HepG2 (cell line): ENCODE measurements at regions of chr2 and their contacts with region 1.

Region 1: GRCh38 chr2:179751163-179751809 is 110.1 kb downstream of the ZNF385B start:
- DNase-seq: peak; percentile 27
- ATAC-seq: peak; percentile 52; the same call in 1 of the 3 replicates
- H3K4me3 ChIP-seq: no peak overlapping the region
- H3K27ac ChIP-seq: no peak overlapping the region
- H3K4me1 ChIP-seq: no peaks in the 10 kb centered on the region
- H3K27me3 ChIP-seq: no peaks in the 10 kb centered on the region
- CTCF ChIP-seq: peak; percentile 80
- EP300 ChIP-seq: no peak
- POLR2A ChIP-seq: no peak
- RAD21 ChIP-seq: peak; percentile 87

Region 2: DNA sequence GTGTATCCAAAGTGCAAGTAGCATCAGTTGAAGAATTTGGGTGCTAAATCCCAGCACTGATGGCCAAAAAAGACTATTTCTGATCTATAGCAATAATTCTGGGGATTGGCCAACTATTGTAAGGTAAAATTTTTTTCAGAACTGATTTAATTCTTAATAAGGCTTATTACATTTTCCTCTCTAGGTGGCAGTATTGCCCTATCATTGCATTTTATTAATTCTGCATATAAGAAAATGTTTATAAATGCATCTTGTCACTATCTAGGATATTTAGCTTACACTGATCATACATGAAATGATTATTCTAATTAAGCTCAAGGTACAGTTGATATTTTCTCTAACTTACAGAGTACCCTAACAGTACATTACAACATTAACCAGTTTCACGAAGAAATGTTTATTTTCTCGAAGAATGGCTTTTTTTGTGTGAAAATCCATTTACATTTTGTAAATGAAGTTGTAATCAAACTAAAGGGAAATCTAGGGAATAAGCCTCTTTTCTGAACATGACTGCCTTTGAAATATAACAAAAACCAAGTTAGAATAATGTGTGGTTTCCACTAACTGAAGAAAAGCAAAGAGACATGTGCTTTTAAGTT is 955.1 kb before region 1 on chr2:
- CTCF ChIA-PET with region 1: no interaction called
- POLR2A ChIA-PET with region 1: no interaction called
- in situ Hi-C with region 1: no loop called
- intact Hi-C with region 1: loop called (anchors 10 kb)
- DNase-seq: peak; percentile 10
- ATAC-seq: no peak
- H3K4me3 ChIP-seq: no peak overlapping the region
- H3K27ac ChIP-seq: no peak overlapping the region
- H3K4me1 ChIP-seq: no peaks in the 10 kb centered on the region
- H3K27me3 ChIP-seq: peaks cover 0 to 23% of the 10 kb centered on the region in 2 experiments; a peak in 2 of 5 replicates
- CTCF ChIP-seq: peak; percentile 22; the same call in 1 of the 2 replicates
- EP300 ChIP-seq: no peak
- POLR2A ChIP-seq: no peak
- RAD21 ChIP-seq: no peak

Region 3: DNA sequence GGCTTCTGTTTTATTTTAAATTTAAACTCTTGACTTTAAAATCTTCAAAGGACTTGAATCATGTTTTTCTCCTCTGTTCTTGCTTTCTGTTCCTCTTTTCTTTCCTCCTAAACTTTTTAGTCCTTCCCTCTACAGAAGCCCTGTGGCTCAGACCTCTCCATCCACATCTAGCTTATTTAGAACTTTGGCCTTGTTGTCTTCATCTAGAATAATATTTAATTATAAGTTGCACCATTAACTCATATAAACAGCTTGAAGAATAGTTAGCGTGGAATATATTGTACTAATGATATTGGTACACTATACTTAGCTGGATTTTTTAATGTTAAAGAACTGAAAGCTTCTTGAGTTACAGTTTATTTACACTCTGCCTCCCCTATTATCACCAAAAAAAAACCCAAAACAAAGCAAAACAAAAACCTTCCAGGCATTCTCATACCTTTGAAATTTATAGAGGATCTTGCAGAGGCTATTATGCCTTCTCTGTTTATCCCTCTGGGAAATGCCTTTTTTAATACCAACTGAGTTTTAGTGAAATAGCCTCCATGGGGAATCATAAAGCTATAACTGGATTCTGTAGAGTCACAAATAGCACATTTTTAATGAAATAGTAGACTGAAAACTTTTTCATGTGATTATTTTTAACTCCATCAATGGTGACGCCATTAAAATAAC is 692.1 kb before region 1 on chr2:
- CTCF ChIA-PET with region 1: no interaction called
- POLR2A ChIA-PET with region 1: no interaction called
- in situ Hi-C with region 1: no loop called
- intact Hi-C with region 1: no loop called
- DNase-seq: no peak
- ATAC-seq: no peak
- H3K4me3 ChIP-seq: no peak overlapping the region
- H3K27ac ChIP-seq: no peak overlapping the region
- H3K4me1 ChIP-seq: no peaks in the 10 kb centered on the region
- H3K27me3 ChIP-seq: peaks cover 0 to 4% of the 10 kb centered on the region in 2 experiments; a peak in 1 of 5 replicates
- CTCF ChIP-seq: no peak
- EP300 ChIP-seq: no peak
- POLR2A ChIP-seq: no peak
- RAD21 ChIP-seq: no peak

Region 4: DNA sequence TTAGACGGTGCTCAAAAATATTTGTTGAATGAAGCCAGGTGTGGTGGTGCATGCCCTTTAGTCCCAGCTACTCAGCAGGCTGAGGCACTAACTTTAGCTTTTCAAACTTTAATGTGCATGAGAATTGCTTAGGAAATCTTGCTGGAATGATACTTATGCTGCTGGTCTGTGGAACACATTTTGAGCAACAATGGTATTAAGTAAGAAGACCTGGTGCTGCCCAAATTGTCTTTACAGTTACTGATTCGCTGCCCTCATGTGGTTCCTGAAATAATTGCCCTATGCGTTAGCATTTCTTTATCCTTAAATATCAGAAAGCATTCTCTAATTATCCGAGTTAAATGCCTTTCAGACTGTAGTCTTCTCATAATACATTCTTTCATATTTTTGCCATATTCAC is 410.6 kb before region 1 on chr2:
- CTCF ChIA-PET with region 1: no interaction called
- POLR2A ChIA-PET with region 1: no interaction called
- in situ Hi-C with region 1: no loop called
- intact Hi-C with region 1: loop called (anchors 5 kb)
- DNase-seq: peak; percentile 54
- ATAC-seq: peak; percentile 15; the same call in 2 of the 3 replicates
- H3K4me3 ChIP-seq: no peak overlapping the region
- H3K27ac ChIP-seq: no peak overlapping the region
- H3K4me1 ChIP-seq: peaks cover 59% of the 10 kb centered on the region
- H3K27me3 ChIP-seq: no peaks in the 10 kb centered on the region
- CTCF ChIP-seq: peak; percentile 72
- EP300 ChIP-seq: no peak
- POLR2A ChIP-seq: no peak
- RAD21 ChIP-seq: peak; percentile 57; the same call in 1 of the 2 replicates

Region 5: DNA sequence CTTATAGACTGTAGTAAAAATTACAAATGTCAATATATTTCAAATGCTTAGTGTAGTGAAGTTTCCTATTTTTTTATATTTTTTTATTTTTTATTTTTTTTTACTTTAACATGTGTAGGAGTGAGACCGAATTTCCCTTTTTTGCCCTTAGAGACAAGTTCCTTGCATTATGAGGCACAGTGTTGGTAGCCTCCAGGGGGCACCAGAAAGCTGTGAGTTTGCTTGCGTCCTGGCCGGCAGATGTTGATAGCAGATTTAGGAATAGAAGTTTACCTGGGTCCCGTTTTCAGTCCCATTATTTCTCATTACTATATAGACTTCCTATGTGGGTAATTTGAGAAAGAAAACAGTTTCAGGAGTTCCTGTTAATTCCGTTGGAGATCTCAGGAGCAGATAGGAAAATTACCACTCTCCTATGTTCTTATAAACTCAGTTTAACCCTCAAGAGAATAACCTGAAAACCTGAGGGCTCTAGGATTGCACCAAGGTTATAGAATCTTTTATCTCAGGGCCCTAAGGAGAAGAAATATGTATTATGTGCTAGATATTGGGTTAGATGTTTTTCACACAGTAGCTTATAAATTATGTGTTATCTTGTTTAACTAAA is 329.1 kb before region 1 on chr2:
- CTCF ChIA-PET with region 1: interaction called, 81 read pairs
- POLR2A ChIA-PET with region 1: no interaction called
- in situ Hi-C with region 1: loop called (anchors 5 kb)
- intact Hi-C with region 1: loop called (anchors 1 kb)
- DNase-seq: peak; percentile 75
- ATAC-seq: peak; percentile 97
- H3K4me3 ChIP-seq: no peak overlapping the region
- H3K27ac ChIP-seq: no peak overlapping the region
- H3K4me1 ChIP-seq: no peaks in the 10 kb centered on the region
- H3K27me3 ChIP-seq: no peaks in the 10 kb centered on the region
- CTCF ChIP-seq: peak; percentile 88
- EP300 ChIP-seq: no peak
- POLR2A ChIP-seq: no peak
- RAD21 ChIP-seq: peak; percentile 88

Region 6: DNA sequence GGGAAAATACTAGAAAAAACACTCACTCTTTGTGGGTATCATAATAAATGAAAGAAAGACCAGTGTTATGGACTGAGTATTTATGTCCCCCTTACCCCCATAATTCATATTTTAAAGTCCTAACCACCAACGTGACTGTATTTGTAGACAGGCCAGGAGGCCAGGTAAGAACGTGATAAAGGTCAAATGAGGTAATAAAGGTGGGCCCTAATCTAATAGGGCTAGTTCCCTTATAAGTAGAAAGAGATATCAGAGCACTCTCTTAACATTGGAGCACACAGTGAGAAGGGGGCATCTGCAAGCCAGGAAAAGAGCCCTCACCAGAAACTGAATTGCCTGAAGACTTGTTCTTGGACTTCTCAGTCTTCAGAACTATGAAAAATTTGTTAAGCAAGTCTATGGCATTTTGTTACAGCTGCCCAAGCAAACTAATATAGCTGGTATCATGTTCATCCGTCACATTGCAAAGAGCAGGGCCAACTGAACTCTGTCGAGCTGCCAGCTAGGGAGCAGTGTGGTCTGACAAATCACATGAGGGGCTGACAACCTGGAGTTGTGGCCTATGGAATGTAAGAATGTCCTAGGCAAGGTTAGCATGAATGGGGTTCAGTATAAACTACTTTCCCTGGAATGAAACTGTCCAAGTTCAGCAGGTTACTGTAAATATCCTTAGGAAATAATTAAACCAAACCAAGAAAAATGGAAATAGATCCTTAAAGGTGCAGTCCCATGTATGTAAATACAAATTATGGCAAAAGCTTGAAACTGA is 170.7 kb before region 1 on chr2:
- CTCF ChIA-PET with region 1: no interaction called
- POLR2A ChIA-PET with region 1: no interaction called
- in situ Hi-C with region 1: no loop called
- intact Hi-C with region 1: loop called (anchors 1 kb)
- DNase-seq: peak; percentile 91
- ATAC-seq: peak; percentile 98
- H3K4me3 ChIP-seq: no peak overlapping the region
- H3K27ac ChIP-seq: peak overlapping the region; percentile 64
- H3K4me1 ChIP-seq: peaks cover 56% of the 10 kb centered on the region
- H3K27me3 ChIP-seq: no peaks in the 10 kb centered on the region
- CTCF ChIP-seq: peak; percentile 73
- EP300 ChIP-seq: peak in 1 of 2 experiments; percentile 65; a peak in 2 of 4 replicates
- POLR2A ChIP-seq: peak; percentile 41 to 74; a peak in 3 of 4 replicates
- RAD21 ChIP-seq: 0 out of 2 replicates have a peak, but pooled peaks have one; percentile 45